Activated CD4-positive, alpha-beta memory T cell treated with anti-CD3 and anti-CD28 coated beads, Interleukin-2, amount 10 ng/mL, durations not matched to agents 7 days and 5 days (primary cell): ENCODE measurements at regions of chr22 and their contacts with region 1.

Region 1: GRCh38 chr22:25747245-25747944 is 5.4 kb downstream of the MYO18B start:
- DNase-seq: no peak
- H3K4me3 Mint-ChIP-seq: no peak overlapping the region
- H3K27ac Mint-ChIP-seq: peak overlapping the region; percentile 100
- H3K4me1 Mint-ChIP-seq: peaks cover 81% of the 10 kb centered on the region
- H3K27me3 Mint-ChIP-seq: no peaks in the 10 kb centered on the region

Region 2: DNA sequence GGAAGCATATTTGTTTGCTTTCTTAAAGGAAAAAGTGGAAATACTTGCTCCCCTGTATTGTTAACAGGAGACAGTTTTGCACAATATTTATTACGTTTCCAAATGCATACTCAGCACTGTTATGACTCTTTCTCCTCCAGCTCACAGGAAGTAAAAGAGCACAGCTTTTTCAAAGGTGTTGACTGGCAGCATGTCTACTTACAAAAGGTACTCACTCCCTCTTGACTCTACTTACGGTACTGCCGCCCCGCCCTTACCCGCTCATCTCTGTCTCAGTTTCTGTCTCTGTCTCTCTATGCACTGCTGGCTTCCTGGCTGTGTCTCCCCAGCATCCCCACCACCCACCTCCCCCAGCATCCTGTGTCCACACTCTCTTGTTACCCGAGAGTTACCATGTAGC is 37.6 kb before region 1 on chr22:
- CTCF ChIA-PET with region 1: interaction called, 5 read pairs
- POLR2A ChIA-PET with region 1: interaction called, 10 read pairs
- DNase-seq: peak; percentile 69
- H3K4me3 Mint-ChIP-seq: no peak overlapping the region
- H3K27ac Mint-ChIP-seq: peak overlapping the region; percentile 70
- H3K4me1 Mint-ChIP-seq: peaks cover 43% of the 10 kb centered on the region
- H3K27me3 Mint-ChIP-seq: no peaks in the 10 kb centered on the region

Region 3: DNA sequence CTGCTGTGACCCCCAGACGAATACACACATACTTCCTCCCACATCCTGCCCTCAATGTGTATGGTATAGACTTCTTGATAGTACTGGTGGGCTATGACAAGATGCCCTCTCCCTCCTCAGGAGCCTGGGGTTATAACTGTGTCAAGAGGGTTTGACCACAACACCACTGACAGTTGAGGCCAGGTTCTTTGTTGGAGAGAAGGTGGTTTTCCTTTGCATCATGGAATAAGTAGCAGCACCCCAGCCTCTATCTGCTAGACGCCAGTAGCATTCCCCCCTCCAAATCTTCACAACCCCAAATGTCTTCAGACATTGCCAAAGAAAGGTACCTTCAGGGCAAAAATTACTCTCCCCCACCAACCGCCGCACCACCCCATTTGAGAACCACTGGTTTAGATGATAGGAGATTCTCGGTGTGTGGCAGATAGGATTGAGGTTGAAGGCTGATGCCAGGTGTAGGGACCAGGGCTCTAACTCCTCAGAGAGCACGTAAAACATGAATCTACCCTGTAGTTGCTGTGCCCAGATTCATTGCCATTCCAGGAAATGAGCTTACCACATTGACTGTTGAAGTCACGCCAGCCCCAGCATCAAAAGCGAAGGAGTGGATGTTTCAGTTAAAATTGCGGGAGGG is 10.9 kb before region 1 on chr22:
- CTCF ChIA-PET with region 1: interaction called, 23 read pairs
- POLR2A ChIA-PET with region 1: interaction called, 49 read pairs
- DNase-seq: peak; percentile 82
- H3K4me3 Mint-ChIP-seq: peak overlapping the region; percentile 39
- H3K27ac Mint-ChIP-seq: peak overlapping the region; percentile 98
- H3K4me1 Mint-ChIP-seq: peaks cover 57% of the 10 kb centered on the region
- H3K27me3 Mint-ChIP-seq: no peaks in the 10 kb centered on the region

Region 4: GRCh38 chr22:25759825-25760231 is 12.4 kb after region 1 on chr22:
- CTCF ChIA-PET with region 1: interaction called, 9 read pairs
- POLR2A ChIA-PET with region 1: interaction called, 11 read pairs
- DNase-seq: no peak
- H3K4me3 Mint-ChIP-seq: no peak overlapping the region
- H3K27ac Mint-ChIP-seq: no peak overlapping the region
- H3K4me1 Mint-ChIP-seq: peaks cover 24% of the 10 kb centered on the region
- H3K27me3 Mint-ChIP-seq: peaks cover 2% of the 10 kb centered on the region

Region 5: GRCh38 chr22:25896098-25896497 is 148.7 kb after region 1 on chr22:
- CTCF ChIA-PET with region 1: no interaction called
- POLR2A ChIA-PET with region 1: no interaction called
- DNase-seq: no peak
- H3K4me3 Mint-ChIP-seq: no peak overlapping the region
- H3K27ac Mint-ChIP-seq: no peak overlapping the region
- H3K4me1 Mint-ChIP-seq: no peaks in the 10 kb centered on the region
- H3K27me3 Mint-ChIP-seq: peaks cover 7% of the 10 kb centered on the region

Region 6: DNA sequence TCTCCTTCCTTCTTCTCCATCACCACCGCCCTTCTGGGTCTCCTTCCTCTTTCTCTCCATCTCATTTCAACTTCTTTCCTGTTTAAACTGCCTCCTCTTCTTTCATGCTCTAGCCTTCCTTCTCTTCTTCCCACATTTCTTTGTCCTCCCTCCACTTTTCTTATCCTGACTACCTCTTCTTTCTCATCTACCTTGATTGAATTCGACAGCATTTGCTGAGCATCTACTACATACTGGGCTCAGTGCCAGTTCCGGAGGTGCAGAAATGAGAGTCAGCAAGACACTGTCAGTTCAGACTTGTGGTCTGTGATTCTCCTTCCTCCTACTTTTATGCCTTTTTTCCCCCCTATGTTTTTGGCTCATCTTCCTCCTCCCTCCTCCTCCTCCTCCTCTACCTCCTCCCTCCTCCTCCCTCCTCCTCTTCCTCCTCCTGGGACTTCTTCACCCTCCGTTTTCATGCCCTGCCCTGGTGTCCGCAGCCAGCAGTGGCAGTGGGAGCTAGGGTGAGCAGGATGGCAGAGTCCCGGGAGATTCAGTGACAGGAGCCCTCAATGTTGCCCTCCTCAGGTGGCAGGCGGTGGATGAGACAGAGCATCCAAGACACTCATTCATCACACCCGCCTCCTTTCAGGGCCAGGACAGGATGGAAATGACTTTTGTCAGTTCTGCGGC is 275.8 kb after region 1 on chr22:
- CTCF ChIA-PET with region 1: no interaction called
- POLR2A ChIA-PET with region 1: no interaction called
- DNase-seq: no peak
- H3K4me3 Mint-ChIP-seq: no peak overlapping the region
- H3K27ac Mint-ChIP-seq: no peak overlapping the region
- H3K4me1 Mint-ChIP-seq: no peaks in the 10 kb centered on the region
- H3K27me3 Mint-ChIP-seq: no peaks in the 10 kb centered on the region